ENCODE measurements at regions of chr17 and their contacts with region 1.

Region 1: DNA sequence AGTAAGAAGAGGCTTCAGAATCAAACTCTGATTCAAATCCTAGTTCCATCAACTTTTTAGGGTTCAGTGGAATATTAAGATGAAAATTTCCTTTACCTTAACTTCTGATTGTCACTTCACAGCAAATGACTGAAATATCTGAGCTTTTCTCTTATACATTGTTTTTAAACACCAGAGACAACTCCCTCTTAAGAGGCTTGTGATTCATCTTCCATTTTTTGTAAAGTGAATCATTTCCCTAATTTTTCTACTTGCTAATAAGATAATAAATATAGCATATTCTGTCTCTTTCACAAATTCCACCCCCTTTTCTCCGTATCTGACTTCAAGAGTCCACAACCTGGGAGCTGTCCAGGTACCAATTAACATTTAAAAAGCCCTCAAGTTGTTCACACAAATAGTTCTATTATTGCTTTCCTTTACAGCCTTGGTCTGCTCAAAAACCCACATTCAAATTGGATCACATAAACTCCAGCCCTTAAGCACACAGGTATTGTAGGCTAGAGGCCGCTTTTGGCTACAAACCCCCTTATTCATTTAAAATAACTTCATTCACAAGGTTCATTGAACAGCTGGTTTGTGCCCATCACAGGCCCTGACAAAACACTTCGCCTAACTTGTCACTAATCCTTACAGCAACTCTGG is 14.1 kb upstream of the UTP6 start:
- DNase-seq: no peak
- H3K27ac ChIP-seq: no peak overlapping the region
- CTCF ChIP-seq: no peak

Region 2: GRCh38 chr17:31310886-31311285 is 604.7 kb before region 1 on chr17:
- CTCF ChIA-PET with region 1: interaction called, 12 read pairs
- POLR2A ChIA-PET with region 1: no interaction called
- DNase-seq: no peak
- H3K27ac ChIP-seq: no peak overlapping the region
- CTCF ChIP-seq: no peak

Region 3: GRCh38 chr17:31842183-31843069 is 73.2 kb before region 1 on chr17:
- CTCF ChIA-PET with region 1: no interaction called
- POLR2A ChIA-PET with region 1: no interaction called
- DNase-seq: peak; percentile 75
- H3K27ac ChIP-seq: peak overlapping the region; percentile 37; the same call in 1 of the 2 replicates
- CTCF ChIP-seq: peak; percentile 96

Region 4: GRCh38 chr17:32141258-32141657 is 225.7 kb after region 1 on chr17:
- CTCF ChIA-PET with region 1: no interaction called
- POLR2A ChIA-PET with region 1: no interaction called
- DNase-seq: peak; percentile 39
- H3K27ac ChIP-seq: peak overlapping the region; percentile 75
- CTCF ChIP-seq: no peak

Region 5: DNA sequence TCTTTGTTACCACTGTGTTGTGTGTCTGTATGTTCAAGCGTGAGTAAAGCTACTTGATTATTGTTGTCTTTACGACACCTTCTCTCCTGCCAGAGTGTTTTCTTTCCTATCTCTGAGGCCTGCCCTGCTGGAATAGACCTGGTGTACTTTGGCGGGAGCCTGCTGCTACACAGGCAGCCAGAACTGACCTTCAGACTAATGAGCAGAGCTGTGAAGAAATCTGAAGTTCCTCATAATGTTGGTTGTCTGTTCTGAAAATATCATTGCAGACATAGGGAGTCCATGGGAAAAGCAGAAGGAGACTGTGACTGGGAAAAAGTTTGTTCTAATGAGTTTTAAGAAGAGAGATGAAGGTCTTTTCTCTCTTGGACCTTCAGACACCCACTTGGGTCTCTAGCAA is 236.6 kb after region 1 on chr17:
- CTCF ChIA-PET with region 1: interaction called, 10 read pairs
- POLR2A ChIA-PET with region 1: no interaction called
- DNase-seq: no peak
- H3K27ac ChIP-seq: no peak overlapping the region
- CTCF ChIP-seq: no peak

Region 6: DNA sequence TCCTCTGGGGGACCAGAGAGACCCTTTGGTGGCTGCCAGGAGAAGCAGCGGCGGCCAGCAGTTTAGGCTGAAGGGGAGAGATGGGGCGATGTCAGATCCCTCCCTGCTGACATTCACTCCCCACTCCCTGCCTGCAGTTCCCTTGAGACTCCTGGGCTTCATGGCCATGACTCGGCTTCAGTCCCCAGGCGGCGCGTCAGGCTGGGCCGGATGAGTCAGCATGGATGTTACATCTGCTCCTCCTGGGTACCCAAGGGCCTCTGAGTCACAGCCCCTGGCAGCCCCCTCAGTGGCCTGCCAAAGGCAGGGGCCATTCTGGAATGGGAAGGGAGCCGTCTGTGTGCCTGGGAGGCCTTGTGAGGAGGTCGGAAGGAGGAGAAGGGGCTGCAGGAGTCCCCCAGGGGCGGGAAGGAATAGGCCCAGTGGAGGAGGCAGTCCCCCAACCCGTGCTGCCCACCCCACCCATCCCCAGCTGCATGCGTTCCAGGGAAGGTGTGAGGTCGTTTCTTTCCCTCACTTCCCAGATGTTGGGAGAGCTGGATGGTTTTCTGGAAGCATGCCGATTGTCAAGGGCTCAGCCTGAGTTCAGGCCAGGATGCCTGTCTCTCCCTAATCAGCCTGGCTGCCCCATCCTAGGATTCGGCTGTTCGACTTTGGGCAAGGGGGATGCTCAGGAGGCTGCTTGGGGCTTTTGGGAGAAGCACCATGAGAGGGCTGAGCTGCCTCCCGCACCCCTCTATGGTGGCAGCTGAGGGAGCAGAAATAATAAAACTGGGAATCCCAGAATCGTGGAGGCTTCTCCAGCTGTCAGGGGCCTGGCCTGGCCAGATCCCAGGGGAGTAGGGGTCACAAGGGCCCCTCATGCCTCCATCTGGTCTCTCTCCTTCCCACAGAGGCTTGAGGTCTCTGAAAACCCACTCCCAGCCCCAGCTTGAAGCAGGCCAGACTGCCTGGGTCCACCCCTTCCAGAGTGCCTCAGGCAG is 359.8 kb after region 1 on chr17:
- CTCF ChIA-PET with region 1: no interaction called
- POLR2A ChIA-PET with region 1: no interaction called
- DNase-seq: peak; percentile 52
- H3K27ac ChIP-seq: no peak overlapping the region
- CTCF ChIP-seq: no peak

Region 7: DNA sequence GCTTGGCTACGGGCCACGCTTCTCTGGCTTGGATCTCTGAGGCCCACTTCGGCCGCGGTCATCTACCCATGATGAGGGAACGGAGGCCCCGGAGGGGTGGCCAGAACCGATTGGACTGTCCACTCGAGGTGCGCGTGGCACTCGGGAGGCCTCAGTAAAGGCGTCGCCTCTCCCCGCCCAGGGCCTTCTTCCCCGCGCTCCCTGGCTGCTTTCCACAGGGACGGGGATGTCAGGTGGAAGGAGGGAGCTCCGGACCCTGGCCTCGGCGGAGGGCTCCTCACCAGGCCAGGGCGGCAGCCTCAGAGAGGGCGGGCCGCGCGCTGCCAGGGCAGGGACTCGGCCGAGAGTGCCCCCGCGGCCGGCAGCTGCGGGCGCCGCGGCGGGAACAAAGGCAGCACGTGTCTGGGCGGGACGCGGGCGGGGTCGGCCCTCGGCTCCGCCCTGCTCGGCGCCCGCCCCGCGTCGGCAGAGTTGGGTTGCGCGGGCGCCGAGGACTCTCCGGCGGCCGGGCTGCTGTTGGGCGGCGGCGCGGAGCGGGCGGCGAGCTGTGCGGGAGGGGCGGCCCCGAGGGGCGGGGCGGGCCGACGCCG is 570.6 kb after region 1 on chr17:
- CTCF ChIA-PET with region 1: no interaction called
- POLR2A ChIA-PET with region 1: no interaction called
- DNase-seq: peak; percentile 75
- H3K27ac ChIP-seq: peak overlapping the region; percentile 71
- CTCF ChIP-seq: no peak

Measured in RWPE1 (cell line).